A673 (cell line): ENCODE measurements at regions of chr9 and their contacts with region 1.

Region 1: GRCh38 chr9:7094052-7094451 is 336.3 kb downstream of the KDM4C start:
- DNase-seq: no peak
- H3K4me3 ChIP-seq: no peak overlapping the region
- H3K27ac ChIP-seq: no peak overlapping the region
- H3K4me1 ChIP-seq: peaks cover 6% of the 10 kb centered on the region
- H3K27me3 ChIP-seq: no peaks in the 10 kb centered on the region
- CTCF ChIP-seq: peak; percentile 44

Region 2: GRCh38 chr9:7150153-7150890 is 56.3 kb after region 1 on chr9:
- CTCF ChIA-PET with region 1: no interaction called
- POLR2A ChIA-PET with region 1: no interaction called
- intact Hi-C with region 1: loop called (anchors 10 kb)
- DNase-seq: no peak
- H3K4me3 ChIP-seq: no peak overlapping the region
- H3K27ac ChIP-seq: no peak overlapping the region
- H3K4me1 ChIP-seq: no peaks in the 10 kb centered on the region
- H3K27me3 ChIP-seq: no peaks in the 10 kb centered on the region
- CTCF ChIP-seq: no peak

Region 3: GRCh38 chr9:7174884-7175283 is 80.8 kb after region 1 on chr9:
- CTCF ChIA-PET with region 1: no interaction called
- POLR2A ChIA-PET with region 1: no interaction called
- intact Hi-C with region 1: no loop called
- DNase-seq: peak; percentile 28
- H3K4me3 ChIP-seq: no peak overlapping the region
- H3K27ac ChIP-seq: no peak overlapping the region
- H3K4me1 ChIP-seq: no peaks in the 10 kb centered on the region
- H3K27me3 ChIP-seq: no peaks in the 10 kb centered on the region
- CTCF ChIP-seq: peak; percentile 49

Region 4: DNA sequence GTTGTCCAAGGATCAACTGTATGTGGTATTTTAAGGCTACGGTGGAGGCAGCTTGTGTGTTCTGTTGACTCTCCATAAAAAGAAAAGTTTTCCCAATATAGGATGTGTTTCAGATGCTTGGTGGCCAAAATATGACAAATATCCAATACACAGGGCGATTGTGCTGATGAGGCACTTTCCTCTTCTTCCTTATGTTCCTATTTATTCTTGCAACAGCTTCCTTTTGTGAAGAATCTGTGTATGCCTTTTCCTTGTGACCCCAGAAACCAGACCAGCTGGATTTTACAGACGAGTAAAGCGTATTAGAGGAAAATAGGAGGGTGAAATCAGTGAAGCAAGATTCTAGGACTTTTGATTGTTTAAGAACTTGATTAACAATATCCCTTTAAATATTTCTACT is 253.5 kb after region 1 on chr9:
- CTCF ChIA-PET with region 1: no interaction called
- POLR2A ChIA-PET with region 1: no interaction called
- intact Hi-C with region 1: no loop called
- DNase-seq: no peak
- H3K4me3 ChIP-seq: no peak overlapping the region
- H3K27ac ChIP-seq: no peak overlapping the region
- H3K4me1 ChIP-seq: peaks cover 2% of the 10 kb centered on the region
- H3K27me3 ChIP-seq: no peaks in the 10 kb centered on the region
- CTCF ChIP-seq: no peak

Region 5: GRCh38 chr9:7640231-7640630 is 546.2 kb after region 1 on chr9:
- CTCF ChIA-PET with region 1: no interaction called
- POLR2A ChIA-PET with region 1: no interaction called
- intact Hi-C with region 1: loop called (anchors 5 kb)
- DNase-seq: no peak
- H3K4me3 ChIP-seq: no peak overlapping the region
- H3K27ac ChIP-seq: no peak overlapping the region
- H3K4me1 ChIP-seq: no peaks in the 10 kb centered on the region
- H3K27me3 ChIP-seq: no peaks in the 10 kb centered on the region
- CTCF ChIP-seq: no peak